MCF 10A (cell line): ENCODE measurements at regions of chr5 and their contacts with region 1.

Region 1: GRCh38 chr5:143244000-143244736 is 159.3 kb downstream of the NR3C1 start:
- DNase-seq: peak; percentile 98
- H3K4me3 Mint-ChIP-seq: peak overlapping the region; percentile 54
- H3K27ac Mint-ChIP-seq: peak overlapping the region; percentile 84
- H3K4me1 Mint-ChIP-seq: peaks cover 61% of the 10 kb centered on the region
- H3K27me3 Mint-ChIP-seq: no peaks in the 10 kb centered on the region
- CTCF ChIP-seq: no peak

Region 2: GRCh38 chr5:143106174-143106573 is 138.0 kb before region 1 on chr5:
- CTCF ChIA-PET with region 1: no interaction called
- POLR2A ChIA-PET with region 1: interaction called, 4 read pairs
- intact Hi-C with region 1: loop called (anchors 5 kb)
- DNase-seq: peak; percentile 79
- H3K4me3 Mint-ChIP-seq: no peak overlapping the region
- H3K27ac Mint-ChIP-seq: no peak overlapping the region
- H3K4me1 Mint-ChIP-seq: peaks cover 5% of the 10 kb centered on the region
- H3K27me3 Mint-ChIP-seq: no peaks in the 10 kb centered on the region
- CTCF ChIP-seq: peak; percentile 33

Region 3: DNA sequence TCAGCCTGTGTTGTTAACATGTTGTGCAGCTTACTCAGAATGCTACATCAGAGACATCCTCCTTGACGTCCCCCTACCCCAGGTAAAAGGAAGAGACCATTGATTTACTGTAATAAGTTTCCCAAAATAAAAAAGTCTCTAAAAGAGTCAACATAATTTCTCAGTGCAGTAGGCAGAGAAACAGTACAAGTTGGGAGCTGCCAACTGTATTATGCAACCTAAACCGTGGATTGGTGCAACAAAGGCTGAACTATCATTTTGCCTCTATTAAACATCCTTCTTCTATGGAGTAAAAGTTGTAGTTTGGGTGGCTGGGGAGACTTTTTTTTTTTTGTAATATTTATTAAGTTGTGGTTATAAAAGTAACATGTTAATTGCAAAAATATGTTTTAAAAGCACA is 48.7 kb before region 1 on chr5:
- CTCF ChIA-PET with region 1: interaction called, 5 read pairs
- POLR2A ChIA-PET with region 1: interaction called, 37 read pairs
- intact Hi-C with region 1: loop called (anchors 1 kb)
- DNase-seq: peak; percentile 80
- H3K4me3 Mint-ChIP-seq: no peak overlapping the region
- H3K27ac Mint-ChIP-seq: peak overlapping the region; percentile 60
- H3K4me1 Mint-ChIP-seq: peaks cover 35% of the 10 kb centered on the region
- H3K27me3 Mint-ChIP-seq: no peaks in the 10 kb centered on the region
- CTCF ChIP-seq: no peak

Region 4: GRCh38 chr5:143217065-143217803 is 26.9 kb before region 1 on chr5:
- CTCF ChIA-PET with region 1: interaction called, 4 read pairs
- POLR2A ChIA-PET with region 1: interaction called, 10 read pairs
- intact Hi-C with region 1: no loop called
- DNase-seq: peak; percentile 60
- H3K4me3 Mint-ChIP-seq: no peak overlapping the region
- H3K27ac Mint-ChIP-seq: peak overlapping the region; percentile 75
- H3K4me1 Mint-ChIP-seq: peaks cover 29% of the 10 kb centered on the region
- H3K27me3 Mint-ChIP-seq: no peaks in the 10 kb centered on the region
- CTCF ChIP-seq: no peak

Region 5: GRCh38 chr5:143262393-143263174 is 18.4 kb after region 1 on chr5:
- CTCF ChIA-PET with region 1: interaction called, 4 read pairs
- POLR2A ChIA-PET with region 1: interaction called, 9 read pairs
- intact Hi-C with region 1: loop called (anchors 1 kb)
- DNase-seq: peak; percentile 95
- H3K4me3 Mint-ChIP-seq: peak overlapping the region; percentile 7
- H3K27ac Mint-ChIP-seq: peak overlapping the region; percentile 61
- H3K4me1 Mint-ChIP-seq: peaks cover 35% of the 10 kb centered on the region
- H3K27me3 Mint-ChIP-seq: no peaks in the 10 kb centered on the region
- CTCF ChIP-seq: no peak

Region 6: GRCh38 chr5:143836161-143836725 is 592.1 kb after region 1 on chr5:
- CTCF ChIA-PET with region 1: no interaction called
- POLR2A ChIA-PET with region 1: no interaction called
- intact Hi-C with region 1: no loop called
- DNase-seq: no peak
- H3K4me3 Mint-ChIP-seq: no peak overlapping the region
- H3K27ac Mint-ChIP-seq: no peak overlapping the region
- H3K4me1 Mint-ChIP-seq: no peaks in the 10 kb centered on the region
- H3K27me3 Mint-ChIP-seq: no peaks in the 10 kb centered on the region
- CTCF ChIP-seq: no peak